GM10248 (cell line): ENCODE measurements at regions of chr5 and their contacts with region 1.

Region 1: GRCh38 chr5:40834391-40834848 is 602 bp downstream of the RPL37 start:
- DNase-seq: no peak
- CTCF ChIP-seq: no peak

Region 2: DNA sequence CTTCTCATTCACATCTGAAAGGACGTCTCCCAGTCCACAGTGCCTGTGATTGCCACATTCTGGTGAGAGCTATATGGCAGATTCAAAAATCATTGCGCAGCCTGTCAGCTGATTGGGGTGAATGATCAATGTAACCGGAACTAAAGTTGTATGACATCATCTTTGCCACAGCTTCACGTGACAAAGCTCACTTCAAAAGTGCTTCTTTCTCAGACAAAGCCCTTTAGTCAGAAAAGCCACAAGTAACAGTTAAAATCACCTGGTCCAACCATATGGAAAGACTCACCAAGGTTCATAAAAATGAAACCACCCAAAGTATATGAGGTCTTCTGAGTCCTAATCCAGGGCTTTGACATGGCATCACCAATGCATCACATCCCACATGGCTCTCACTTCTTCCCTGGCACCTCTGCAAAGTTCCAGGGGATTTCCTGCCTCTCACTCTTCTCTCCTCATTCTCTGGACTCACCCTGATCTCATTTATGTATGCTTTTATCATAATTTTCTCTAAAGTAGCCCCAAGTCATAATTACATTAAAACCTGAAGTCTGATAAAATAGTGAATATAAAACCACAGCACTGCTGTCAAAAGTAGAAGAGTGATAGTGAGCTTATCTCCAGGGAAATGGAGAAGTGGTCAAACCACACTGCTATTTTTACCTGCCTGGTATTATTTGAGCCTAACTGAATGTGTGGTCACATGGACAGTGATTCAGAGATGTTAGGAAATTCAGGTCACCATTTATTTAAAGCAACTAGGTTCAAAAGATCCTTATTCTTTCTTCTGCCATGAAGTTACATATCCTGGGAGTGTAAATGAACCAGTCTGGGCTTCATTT is 347.8 kb before region 1 on chr5:
- CTCF ChIA-PET with region 1: no interaction called
- POLR2A ChIA-PET with region 1: no interaction called
- DNase-seq: peak; percentile 5
- CTCF ChIP-seq: no peak

Region 3: DNA sequence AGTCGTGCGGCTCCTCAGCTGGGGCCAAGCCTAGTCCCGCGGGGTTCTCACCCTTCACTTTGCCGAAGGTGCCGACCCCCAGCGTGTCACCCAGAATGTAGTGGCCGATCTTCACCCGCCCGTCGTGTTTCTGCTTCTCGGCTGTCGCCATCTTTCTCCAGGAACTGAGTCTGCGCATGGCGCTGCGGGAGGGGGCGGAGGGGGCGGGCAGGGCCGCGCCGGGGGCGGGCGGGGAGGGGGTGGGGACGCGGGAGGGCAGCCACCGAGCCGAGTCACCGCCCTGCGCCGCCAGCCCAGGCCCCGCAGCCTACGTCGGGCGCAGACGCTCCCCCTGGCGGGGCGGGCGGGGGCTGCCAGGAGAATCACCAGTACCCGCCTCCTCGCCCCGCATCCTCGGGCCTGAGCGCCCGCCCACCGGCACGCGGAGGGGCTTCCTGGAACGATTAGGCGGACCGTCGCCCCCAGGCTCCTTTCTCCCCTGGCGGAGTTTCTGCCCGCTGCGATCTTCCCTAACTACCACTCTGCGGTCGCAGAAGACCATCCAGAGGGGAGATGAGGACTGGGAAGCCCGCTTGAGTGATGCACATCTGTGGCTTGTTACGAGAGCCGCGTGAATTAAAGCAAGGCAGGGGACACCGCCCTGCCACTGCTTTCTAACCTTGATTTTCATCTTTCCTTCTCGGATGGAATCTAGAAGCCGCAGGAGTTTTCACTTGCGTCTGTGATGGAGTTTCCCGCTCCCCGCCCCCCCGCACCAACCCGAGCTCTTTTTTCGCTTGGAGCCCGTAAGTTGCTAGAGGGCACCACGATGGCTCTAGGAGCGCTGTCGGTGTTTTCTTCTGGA is 36.2 kb before region 1 on chr5 and contains the start of gene PRKAA1:
- CTCF ChIA-PET with region 1: no interaction called
- POLR2A ChIA-PET with region 1: no interaction called
- DNase-seq: peak; percentile 92
- CTCF ChIP-seq: peak; percentile 73

Region 4: GRCh38 chr5:40823459-40823858 is 11.0 kb before region 1 on chr5:
- CTCF ChIA-PET with region 1: interaction called, 3 read pairs
- POLR2A ChIA-PET with region 1: interaction called, 13 read pairs
- DNase-seq: no peak
- CTCF ChIP-seq: no peak